Heart right ventricle (tissue), 16 donors: ENCODE measurements at regions of chr11 and their contacts with region 1.

Region 1: DNA sequence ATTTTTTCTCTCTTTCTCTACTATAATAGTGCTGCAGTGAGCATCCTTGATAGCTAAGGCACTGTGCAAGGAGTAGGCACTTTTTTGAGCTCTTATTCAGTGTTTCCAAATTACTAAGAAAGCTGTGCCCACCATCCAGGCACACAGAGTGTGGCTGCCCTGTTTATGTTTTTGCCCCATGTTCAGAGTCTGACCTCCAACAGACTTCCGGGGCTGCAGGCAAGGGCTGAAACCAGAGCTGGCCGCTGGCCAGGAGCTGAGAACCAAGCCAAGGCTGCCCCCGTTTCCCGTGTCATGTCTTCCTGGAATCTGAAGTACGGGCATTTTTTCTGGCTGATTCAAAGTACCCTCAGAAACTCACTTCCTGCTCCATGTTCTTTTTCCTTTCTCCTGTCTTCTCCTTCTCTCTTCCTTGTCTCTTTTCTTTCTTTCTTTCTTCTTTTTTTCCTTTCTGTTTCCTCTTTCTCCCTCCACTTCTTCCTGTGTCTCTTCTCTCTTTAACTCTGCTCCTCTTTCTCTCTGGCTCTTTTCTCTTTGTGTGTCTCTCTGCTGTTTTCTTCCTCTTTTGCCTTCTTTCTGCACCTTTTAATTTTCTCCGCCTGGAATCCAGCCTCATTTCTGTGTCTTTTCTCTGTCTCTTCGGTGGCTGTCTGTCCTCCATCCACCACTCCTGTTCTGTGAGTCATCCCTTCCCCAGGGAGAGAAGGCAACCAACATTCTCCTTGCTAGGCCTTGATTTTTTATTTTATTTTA is 17.0 kb upstream of the KCTD14 start:
- DNase-seq: peak; percentile 59 to 75
- ATAC-seq: peak; percentile 42 to 80 (median 71)
- H3K4me3 ChIP-seq: peak overlapping the region in 6 of 10 donors; percentile 1 to 32 (median 18)
- H3K27ac ChIP-seq: peak overlapping the region in 9 of 10 donors; percentile 18 to 87 (median 56)
- H3K4me1 ChIP-seq: peaks cover 0 to 22% (median 10%) of the 10 kb centered on the region in 9 donors
- H3K27me3 ChIP-seq: no peaks in the 10 kb centered on the region
- CTCF ChIP-seq: no peak

Region 2: DNA sequence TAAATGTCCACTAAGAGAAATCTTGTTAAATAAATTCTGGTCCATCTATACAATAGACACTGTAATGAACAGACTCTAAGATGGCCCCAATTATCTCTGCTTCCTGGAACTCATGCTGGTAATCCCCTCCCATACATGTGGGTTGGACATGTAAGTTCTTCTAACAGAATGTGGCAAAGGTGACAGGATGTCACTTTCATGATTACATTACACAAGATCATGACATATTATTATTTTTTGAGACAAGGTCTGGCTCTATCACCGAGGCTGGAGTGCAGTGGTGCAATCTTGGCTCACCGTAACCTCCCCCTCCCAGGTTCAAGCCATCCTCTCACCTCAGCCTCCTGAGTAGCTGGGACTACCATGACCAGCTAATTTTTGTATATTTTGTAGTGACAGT is 54.2 kb after region 1 on chr11:
- intact Hi-C with region 1: loop called in 1 of 10 experiments (anchors 10 kb)
- DNase-seq: no peak
- ATAC-seq: no peak
- H3K4me3 ChIP-seq: no peak overlapping the region
- H3K27ac ChIP-seq: no peak overlapping the region
- H3K4me1 ChIP-seq: peaks cover 0 to 6% (median 0%) of the 10 kb centered on the region in 9 donors
- H3K27me3 ChIP-seq: no peaks in the 10 kb centered on the region
- CTCF ChIP-seq: no peak